ENCODE measurements at regions of chr1 and their contacts with region 1.

Region 1: GRCh38 chr1:110130113-110130596 is 17.9 kb downstream of the UBL4B start:
- DNase-seq: no peak
- H3K4me3 ChIP-seq: no peak overlapping the region
- H3K27ac ChIP-seq: no peak overlapping the region
- H3K4me1 ChIP-seq: no peaks in the 10 kb centered on the region
- H3K27me3 ChIP-seq: peaks cover 13% of the 10 kb centered on the region
- CTCF ChIP-seq: peak in 1 of 2 donors; percentile 47

Region 2: DNA sequence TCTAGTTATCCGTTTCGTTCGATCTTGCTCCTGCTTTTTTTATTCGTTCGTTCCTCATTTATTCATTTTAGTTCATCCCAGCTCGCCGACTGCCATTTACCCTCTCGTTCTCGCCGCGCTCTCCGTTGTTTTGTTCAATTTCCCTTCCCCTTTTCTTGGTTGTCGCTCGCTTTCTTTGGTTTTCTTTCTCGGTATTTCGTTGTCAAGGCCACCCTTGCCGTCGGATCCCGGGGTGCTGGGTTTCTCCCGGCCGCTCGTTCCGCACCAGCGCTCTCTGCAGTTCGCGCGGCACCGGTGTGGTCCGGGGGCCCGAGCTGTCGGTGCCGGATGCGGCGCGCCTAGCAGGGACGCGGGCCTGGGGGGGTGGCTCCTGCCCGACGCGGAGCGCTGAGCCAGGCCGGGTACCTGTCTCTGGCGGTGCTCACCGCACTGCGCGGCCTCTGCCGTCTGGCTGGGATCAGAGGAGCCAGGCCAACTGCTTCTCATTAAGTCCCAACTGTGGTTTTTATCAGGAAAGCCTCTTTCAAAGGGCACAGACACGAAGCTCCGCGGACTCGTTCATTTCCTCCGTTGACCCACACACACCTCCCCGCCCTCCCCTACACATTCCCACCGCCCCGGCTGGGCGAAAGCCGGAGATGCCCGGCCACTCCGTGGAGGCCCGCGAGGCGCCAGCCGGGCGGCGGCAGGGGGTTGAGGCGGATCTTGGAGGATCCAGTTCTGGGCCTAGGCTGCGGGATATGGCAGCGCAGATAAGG is 61.3 kb before region 1 on chr1:
- CTCF ChIA-PET with region 1: no interaction called
- dilution Hi-C with region 1: loop called (anchors 5 kb)
- in situ Hi-C with region 1: no loop called
- intact Hi-C with region 1: no loop called
- DNase-seq: no peak
- H3K4me3 ChIP-seq: no peak overlapping the region
- H3K27ac ChIP-seq: no peak overlapping the region
- H3K4me1 ChIP-seq: no peaks in the 10 kb centered on the region
- H3K27me3 ChIP-seq: peaks cover 40% of the 10 kb centered on the region
- CTCF ChIP-seq: no peak

Region 3: GRCh38 chr1:110087812-110088738 is 42.1 kb before region 1 on chr1:
- CTCF ChIA-PET with region 1: no interaction called
- dilution Hi-C with region 1: no loop called
- in situ Hi-C with region 1: no loop called
- intact Hi-C with region 1: loop called (anchors 1 kb)
- DNase-seq: peak; percentile 31
- H3K4me3 ChIP-seq: no peak overlapping the region
- H3K27ac ChIP-seq: no peak overlapping the region
- H3K4me1 ChIP-seq: no peaks in the 10 kb centered on the region
- H3K27me3 ChIP-seq: peaks cover 22% of the 10 kb centered on the region
- CTCF ChIP-seq: peak; percentile 69

Region 4: GRCh38 chr1:110356405-110356804 is 226.2 kb after region 1 on chr1:
- CTCF ChIA-PET with region 1: no interaction called
- dilution Hi-C with region 1: no loop called
- in situ Hi-C with region 1: no loop called
- intact Hi-C with region 1: no loop called
- DNase-seq: peak; percentile 52
- H3K4me3 ChIP-seq: no peak overlapping the region
- H3K27ac ChIP-seq: no peak overlapping the region
- H3K4me1 ChIP-seq: peaks cover 6% of the 10 kb centered on the region
- H3K27me3 ChIP-seq: no peaks in the 10 kb centered on the region
- CTCF ChIP-seq: no peak